K562 (cell line): ENCODE measurements at regions of chr3 and their contacts with region 1.

Region 1: DNA sequence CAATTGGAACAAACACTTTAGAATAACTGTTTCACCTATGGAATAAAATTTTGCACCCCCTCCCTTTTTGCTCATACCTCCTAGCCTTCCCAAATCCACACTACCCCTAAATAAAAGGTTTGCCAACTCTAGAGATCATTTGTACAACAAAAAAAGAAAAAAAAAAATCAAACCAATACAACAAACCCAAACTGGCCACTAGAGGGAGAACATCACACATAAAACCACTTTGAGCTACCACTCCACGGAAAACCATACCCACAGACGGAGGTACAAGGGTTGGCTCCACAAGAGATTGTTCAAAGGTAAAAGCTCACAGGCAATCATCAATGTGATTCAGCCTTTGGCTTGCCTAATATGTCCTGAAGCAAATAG is 47.6 kb downstream of the SETMAR start:
- DNase-seq: peak; percentile 69 to 87 (median 76)
- ATAC-seq: peak; percentile 88
- H3K4me3 ChIP-seq: peak overlapping the region; percentile 4; the same call in 1 of the 2 replicates
- H3K27ac ChIP-seq: peak overlapping the region; percentile 82
- H3K4me1 ChIP-seq: peaks cover 0 to 19% of the 10 kb centered on the region in 2 experiments; a peak in 4 of 5 replicates
- H3K27me3 ChIP-seq: no peaks in the 10 kb centered on the region
- CTCF ChIP-seq: peak; percentile 77 to 94 (median 89)
- EP300 ChIP-seq: no peak
- POLR2A ChIP-seq: no peak
- RAD21 ChIP-seq: peak; percentile 84 to 88

Region 2: DNA sequence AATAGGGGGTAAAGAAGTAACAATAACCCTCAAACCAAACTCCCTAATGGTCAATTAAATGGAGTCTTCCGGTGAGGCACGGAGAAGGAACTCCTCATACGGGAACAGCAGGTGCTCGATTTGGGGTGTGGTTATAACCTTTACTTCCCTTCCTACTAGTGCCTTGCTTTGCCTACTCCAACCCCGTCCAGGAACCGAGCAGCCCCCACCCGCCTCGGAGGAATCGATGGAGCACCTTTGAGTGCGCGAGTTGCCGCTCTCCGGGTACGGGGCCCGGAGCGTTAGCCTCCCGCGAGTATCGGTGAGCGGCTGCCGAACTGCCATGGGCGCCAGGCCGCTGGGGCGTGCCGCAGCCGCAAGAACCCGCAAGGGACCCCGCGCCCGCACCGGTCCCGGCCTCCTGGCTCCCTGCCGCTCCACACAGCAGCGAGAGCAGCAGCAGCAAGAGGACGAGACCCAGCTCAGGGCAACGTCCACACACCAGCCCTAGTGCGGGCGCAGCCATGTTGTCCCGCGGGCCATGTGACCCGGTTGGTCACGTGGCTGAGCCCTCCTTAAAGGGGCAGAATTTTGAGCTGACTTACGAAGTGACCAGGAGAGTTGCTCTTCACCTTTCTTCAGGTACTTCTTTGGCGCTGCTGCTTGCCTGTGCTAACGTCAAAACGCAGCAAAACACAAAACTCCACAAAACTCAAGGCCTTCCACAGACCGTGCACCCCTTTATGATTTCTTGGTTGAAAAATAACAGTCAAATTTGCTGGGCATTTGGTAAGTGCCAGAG is 116.2 kb after region 1 on chr3 and contains the start of gene SUMF1:
- CTCF ChIA-PET with region 1: no interaction called
- POLR2A ChIA-PET with region 1: interaction called, 3 read pairs
- in situ Hi-C with region 1: no loop called
- intact Hi-C with region 1: loop called (anchors 10 kb)
- DNase-seq: peak; percentile 91 to 94 (median 94)
- ATAC-seq: peak; percentile 99
- H3K4me3 ChIP-seq: peak within 1 kb of the TSS; percentile 71
- H3K27ac ChIP-seq: peak within 1 kb of the TSS; percentile 75
- H3K4me1 ChIP-seq: peaks cover 13 to 14% of the 10 kb centered on the region in 2 experiments; a peak in 4 of 5 replicates
- H3K27me3 ChIP-seq: no peaks in the 10 kb centered on the region
- CTCF ChIP-seq: no peak
- EP300 ChIP-seq: 0 out of 2 replicates have a peak, but pooled peaks have one; percentile 12
- POLR2A ChIP-seq: peak; percentile 94
- RAD21 ChIP-seq: peak in 1 of 2 experiments; percentile 1; a peak in 1 of 4 replicates
- polyA plus RNA-seq, gene SUMF1: 1.3 to 1.4 TPM

Region 3: GRCh38 chr3:4571690-4572334 is 221.0 kb after region 1 on chr3:
- CTCF ChIA-PET with region 1: interaction called, 7 read pairs
- POLR2A ChIA-PET with region 1: interaction called, 3 read pairs
- in situ Hi-C with region 1: no loop called
- intact Hi-C with region 1: loop called (anchors 1 kb)
- DNase-seq: peak in 2 of 4 experiments; percentile 52 to 57
- ATAC-seq: peak; percentile 90
- H3K4me3 ChIP-seq: no peak overlapping the region
- H3K27ac ChIP-seq: no peak overlapping the region
- H3K4me1 ChIP-seq: peaks cover 3 to 9% of the 10 kb centered on the region in 2 experiments; a peak in 2 of 5 replicates
- H3K27me3 ChIP-seq: no peaks in the 10 kb centered on the region; a peak in 1 of 5 replicates
- CTCF ChIP-seq: peak; percentile 56 to 62 (median 57); a peak in 5 of 6 replicates
- EP300 ChIP-seq: no peak
- POLR2A ChIP-seq: no peak
- RAD21 ChIP-seq: peak; percentile 51 to 83; a peak in 3 of 4 replicates

Region 4: DNA sequence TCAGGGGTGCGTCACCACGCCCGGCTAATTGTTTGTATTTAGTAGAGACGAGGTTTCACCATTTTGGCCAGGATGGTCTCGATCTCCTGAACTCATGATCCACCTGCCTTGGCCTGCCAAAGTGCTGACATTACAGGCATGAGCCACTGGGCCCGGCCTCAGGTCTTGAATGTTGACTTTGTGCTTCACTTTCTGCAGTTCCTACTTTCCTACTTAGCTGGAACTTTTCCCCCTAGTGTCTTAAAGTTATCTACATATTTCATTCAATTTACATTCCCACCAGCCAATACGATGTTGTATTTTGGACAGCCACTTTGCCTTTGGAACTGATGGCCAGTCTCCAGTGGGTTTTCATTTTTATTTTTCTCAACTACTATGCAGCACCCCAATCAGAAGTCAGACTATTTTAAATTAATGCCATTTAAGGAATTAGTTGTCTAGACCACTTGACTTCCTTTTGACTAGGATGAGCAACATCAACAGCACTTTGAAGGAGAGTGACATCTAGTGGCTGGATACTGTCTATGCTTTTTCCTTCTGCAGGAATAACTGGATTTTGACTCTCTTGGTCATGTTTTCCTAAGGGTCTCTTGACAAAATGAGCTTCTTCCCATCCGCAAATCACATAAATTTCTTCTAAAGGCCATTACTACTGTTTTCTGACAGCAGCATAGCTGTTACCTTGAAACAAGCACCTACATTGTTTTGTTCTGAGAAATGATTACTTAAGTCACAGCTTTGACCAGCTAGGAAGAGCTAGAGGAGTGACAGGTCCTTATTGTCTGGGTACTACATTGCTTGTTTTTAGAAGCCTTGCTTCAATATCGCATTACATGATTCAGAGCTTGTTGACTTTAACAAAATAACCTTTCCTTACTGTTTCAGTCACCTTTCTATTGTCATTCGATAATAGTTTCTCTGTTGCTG is 282.6 kb after region 1 on chr3:
- CTCF ChIA-PET with region 1: interaction called, 27 read pairs
- POLR2A ChIA-PET with region 1: interaction called, 6 read pairs
- in situ Hi-C with region 1: no loop called
- intact Hi-C with region 1: loop called (anchors 1 kb)
- DNase-seq: peak; percentile 32 to 73 (median 54)
- ATAC-seq: peak; percentile 86
- H3K4me3 ChIP-seq: no peak overlapping the region
- H3K27ac ChIP-seq: no peak overlapping the region
- H3K4me1 ChIP-seq: peaks cover 2 to 4% of the 10 kb centered on the region in 2 experiments; a peak in 3 of 5 replicates
- H3K27me3 ChIP-seq: no peaks in the 10 kb centered on the region
- CTCF ChIP-seq: peak; percentile 77 to 97 (median 91)
- EP300 ChIP-seq: no peak
- POLR2A ChIP-seq: no peak
- RAD21 ChIP-seq: peak; percentile 96 to 97

Region 5: DNA sequence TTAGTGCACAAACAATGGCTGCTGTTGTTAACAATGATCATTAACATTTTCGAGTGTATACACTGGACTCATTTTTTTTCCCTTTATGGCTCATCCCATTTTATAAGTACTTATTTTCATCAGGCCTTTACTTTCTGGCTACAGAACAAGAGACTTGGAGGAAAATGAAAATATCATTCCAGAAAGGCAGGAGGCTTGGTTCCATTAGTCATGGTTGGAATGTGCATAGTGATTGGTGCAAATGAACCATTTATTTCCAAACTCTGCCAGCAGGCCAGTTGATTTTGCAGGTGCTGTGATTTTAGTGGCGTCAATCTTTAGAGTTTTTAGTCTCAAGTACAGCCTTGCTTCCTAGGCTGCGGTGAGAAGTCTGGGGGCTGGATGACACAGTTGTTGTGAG is 294.2 kb after region 1 on chr3:
- CTCF ChIA-PET with region 1: no interaction called
- POLR2A ChIA-PET with region 1: no interaction called
- in situ Hi-C with region 1: loop called (anchors 5 kb)
- intact Hi-C with region 1: no loop called
- DNase-seq: no peak
- ATAC-seq: no peak
- H3K4me3 ChIP-seq: no peak overlapping the region
- H3K27ac ChIP-seq: no peak overlapping the region
- H3K4me1 ChIP-seq: peaks cover 3 to 17% of the 10 kb centered on the region in 2 experiments; a peak in 3 of 5 replicates
- H3K27me3 ChIP-seq: no peaks in the 10 kb centered on the region
- CTCF ChIP-seq: no peak
- EP300 ChIP-seq: no peak
- POLR2A ChIP-seq: no peak
- RAD21 ChIP-seq: no peak

Region 6: GRCh38 chr3:4693620-4694019 is 342.8 kb after region 1 on chr3:
- CTCF ChIA-PET with region 1: no interaction called
- POLR2A ChIA-PET with region 1: no interaction called
- in situ Hi-C with region 1: no loop called
- intact Hi-C with region 1: loop called (anchors 5 kb)
- DNase-seq: no peak
- ATAC-seq: no peak
- H3K4me3 ChIP-seq: no peak overlapping the region
- H3K27ac ChIP-seq: no peak overlapping the region
- H3K4me1 ChIP-seq: no peaks in the 10 kb centered on the region
- H3K27me3 ChIP-seq: no peaks in the 10 kb centered on the region
- CTCF ChIP-seq: no peak
- EP300 ChIP-seq: no peak
- POLR2A ChIP-seq: no peak
- RAD21 ChIP-seq: no peak

Region 7: GRCh38 chr3:4712143-4712542 is 361.4 kb after region 1 on chr3:
- CTCF ChIA-PET with region 1: no interaction called
- POLR2A ChIA-PET with region 1: no interaction called
- in situ Hi-C with region 1: no loop called
- intact Hi-C with region 1: loop called (anchors 5 kb)
- DNase-seq: no peak
- ATAC-seq: no peak
- H3K4me3 ChIP-seq: no peak overlapping the region
- H3K27ac ChIP-seq: no peak overlapping the region
- H3K4me1 ChIP-seq: no peaks in the 10 kb centered on the region; a peak in 1 of 5 replicates
- H3K27me3 ChIP-seq: no peaks in the 10 kb centered on the region
- CTCF ChIP-seq: no peak
- EP300 ChIP-seq: no peak
- POLR2A ChIP-seq: no peak
- RAD21 ChIP-seq: 0 out of 4 replicates have a peak, but pooled peaks of 1 of the 2 experiments have one; percentile 3